Mammary epithelial cell (primary cell): ENCODE measurements at regions of chr3 and their contacts with region 1.

Region 1: GRCh38 chr3:112582244-112582874 is 20.5 kb downstream of the SLC35A5 start:
- DNase-seq: peak; percentile 29
- H3K4me3 ChIP-seq: no peak overlapping the region
- H3K27ac ChIP-seq: no peak overlapping the region
- H3K4me1 ChIP-seq: no peaks in the 10 kb centered on the region
- H3K27me3 ChIP-seq: no peaks in the 10 kb centered on the region
- CTCF ChIP-seq: peak; percentile 50 to 68

Region 2: GRCh38 chr3:112273536-112273935 is 308.8 kb before region 1 on chr3:
- CTCF ChIA-PET with region 1: no interaction called
- dilution Hi-C with region 1: no loop called
- in situ Hi-C with region 1: no loop called
- intact Hi-C with region 1: no loop called
- DNase-seq: no peak
- H3K4me3 ChIP-seq: no peak overlapping the region
- H3K27ac ChIP-seq: no peak overlapping the region
- H3K4me1 ChIP-seq: no peaks in the 10 kb centered on the region
- H3K27me3 ChIP-seq: peaks cover 3% of the 10 kb centered on the region
- CTCF ChIP-seq: no peak

Region 3: GRCh38 chr3:112407214-112407887 is 175.0 kb before region 1 on chr3:
- CTCF ChIA-PET with region 1: no interaction called
- dilution Hi-C with region 1: no loop called
- in situ Hi-C with region 1: no loop called
- intact Hi-C with region 1: no loop called
- DNase-seq: no peak
- H3K4me3 ChIP-seq: no peak overlapping the region
- H3K27ac ChIP-seq: no peak overlapping the region
- H3K4me1 ChIP-seq: no peaks in the 10 kb centered on the region
- H3K27me3 ChIP-seq: no peaks in the 10 kb centered on the region
- CTCF ChIP-seq: no peak

Region 4: DNA sequence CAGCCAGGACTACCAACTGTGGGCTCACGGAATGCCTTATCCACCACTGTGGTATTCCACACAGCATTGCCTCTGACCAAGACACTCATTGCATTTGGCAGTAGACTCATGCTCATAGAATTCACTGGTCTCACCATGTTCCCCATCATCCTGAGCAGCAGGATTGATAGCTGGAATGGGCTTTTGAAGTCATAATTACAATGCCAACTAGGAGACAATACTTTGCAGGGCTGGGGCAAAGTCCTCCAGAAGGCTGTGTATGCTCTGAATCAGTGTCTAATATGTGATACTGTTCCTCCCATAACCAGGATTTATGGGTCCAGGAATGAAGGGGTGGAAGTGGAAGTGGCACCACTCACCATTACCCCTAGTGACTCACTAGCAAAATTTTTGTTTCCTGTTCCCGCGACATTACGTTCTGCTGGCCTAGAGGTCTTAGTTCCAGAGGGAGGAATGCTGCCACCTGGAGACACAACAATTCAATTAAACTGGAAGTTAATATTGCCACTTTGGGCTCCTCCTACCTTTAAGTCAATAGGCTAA is 117.1 kb after region 1 on chr3:
- CTCF ChIA-PET with region 1: no interaction called
- dilution Hi-C with region 1: no loop called
- in situ Hi-C with region 1: no loop called
- intact Hi-C with region 1: loop called (anchors 10 kb)
- DNase-seq: peak; percentile 69
- H3K4me3 ChIP-seq: no peak overlapping the region
- H3K27ac ChIP-seq: no peak overlapping the region
- H3K4me1 ChIP-seq: peaks cover 9% of the 10 kb centered on the region
- H3K27me3 ChIP-seq: no peaks in the 10 kb centered on the region
- CTCF ChIP-seq: peak in 1 of 2 donors; percentile 27

Region 5: DNA sequence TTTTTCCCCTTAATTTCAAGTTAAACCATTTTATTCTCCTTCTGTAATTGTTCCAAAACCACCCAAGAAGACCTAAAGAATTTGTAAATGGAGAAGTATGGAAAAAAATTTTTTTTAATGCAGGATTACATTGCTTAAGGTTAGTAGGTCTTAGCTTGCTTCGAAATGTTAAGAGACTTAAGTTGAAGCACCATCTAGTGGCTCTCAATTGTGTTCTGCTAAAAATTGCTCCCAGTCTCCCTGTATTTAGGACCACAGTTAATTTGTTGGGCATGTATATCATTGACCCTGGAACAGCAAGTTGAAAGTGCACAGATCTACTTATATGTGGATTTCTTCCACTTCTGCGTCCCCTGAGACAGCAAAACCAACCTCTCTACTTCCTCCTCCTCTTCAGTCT is 231.9 kb after region 1 on chr3:
- CTCF ChIA-PET with region 1: no interaction called
- dilution Hi-C with region 1: no loop called
- in situ Hi-C with region 1: loop called in 1 of 2 experiments (anchors 10 kb)
- intact Hi-C with region 1: loop called (anchors 1 kb)
- DNase-seq: peak; percentile 46
- H3K4me3 ChIP-seq: no peak overlapping the region
- H3K27ac ChIP-seq: no peak overlapping the region
- H3K4me1 ChIP-seq: peaks cover 7% of the 10 kb centered on the region
- H3K27me3 ChIP-seq: no peaks in the 10 kb centered on the region
- CTCF ChIP-seq: peak; percentile 38 to 66

Region 6: DNA sequence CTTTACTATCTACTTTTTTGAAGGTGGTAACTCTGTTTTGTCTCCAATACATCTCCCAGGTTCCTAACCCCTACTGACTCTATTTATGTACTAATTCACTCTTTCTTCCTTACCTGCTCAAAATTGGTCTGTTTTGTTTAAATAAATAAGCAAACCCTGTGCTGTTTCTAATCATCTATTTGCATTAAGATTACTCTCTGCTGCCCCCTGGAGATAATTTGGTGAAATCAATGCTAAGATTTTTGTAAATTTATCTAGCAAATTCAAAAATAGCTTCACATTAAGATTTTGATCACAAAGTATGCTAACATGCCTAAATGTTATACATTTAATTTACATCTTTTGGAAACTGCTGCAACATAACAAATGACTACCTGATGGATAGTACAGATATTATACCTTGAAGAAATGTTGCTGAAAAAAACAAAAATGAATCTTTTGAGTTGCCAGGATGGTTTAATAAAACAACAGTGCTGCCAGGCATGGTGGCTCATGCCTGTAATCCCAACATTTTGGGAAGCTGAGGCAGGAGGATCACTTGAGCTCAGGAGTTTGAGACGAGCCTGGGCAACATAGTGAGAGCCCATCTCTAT is 397.0 kb after region 1 on chr3:
- CTCF ChIA-PET with region 1: no interaction called
- dilution Hi-C with region 1: no loop called
- in situ Hi-C with region 1: loop called (anchors 5 to 10 kb)
- intact Hi-C with region 1: loop called (anchors 2 kb)
- DNase-seq: peak; percentile 5
- H3K4me3 ChIP-seq: no peak overlapping the region
- H3K27ac ChIP-seq: no peak overlapping the region
- H3K4me1 ChIP-seq: no peaks in the 10 kb centered on the region
- H3K27me3 ChIP-seq: no peaks in the 10 kb centered on the region
- CTCF ChIP-seq: peak; percentile 56 to 58

Region 7: DNA sequence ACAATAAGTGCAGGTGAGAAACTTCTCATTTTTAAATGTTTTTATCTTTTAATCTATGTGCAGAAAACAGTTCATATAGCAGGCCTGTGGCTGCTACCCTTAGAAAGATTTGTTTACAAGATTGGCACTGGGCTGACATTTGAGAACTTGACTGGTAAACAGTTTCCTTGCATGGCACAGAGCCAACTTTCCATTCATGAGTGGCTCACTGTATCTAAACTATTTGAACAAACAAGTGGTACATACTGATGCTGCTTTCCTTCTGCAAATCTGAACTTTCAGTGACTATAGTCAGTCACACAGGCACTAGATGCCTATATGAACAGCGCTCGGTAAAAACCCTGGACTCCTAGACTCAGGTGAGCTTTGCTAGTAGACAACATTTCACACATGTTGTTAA is 402.1 kb after region 1 on chr3:
- CTCF ChIA-PET with region 1: no interaction called
- dilution Hi-C with region 1: no loop called
- in situ Hi-C with region 1: loop called (anchors 5 to 10 kb)
- intact Hi-C with region 1: loop called (anchors 2 kb)
- DNase-seq: no peak
- H3K4me3 ChIP-seq: no peak overlapping the region
- H3K27ac ChIP-seq: no peak overlapping the region
- H3K4me1 ChIP-seq: no peaks in the 10 kb centered on the region
- H3K27me3 ChIP-seq: no peaks in the 10 kb centered on the region
- CTCF ChIP-seq: no peak